MCF 10A (cell line): ENCODE measurements at regions of chr4 and their contacts with region 1.

Region 1: GRCh38 chr4:98467627-98468072 is 190.8 kb downstream of the TSPAN5 start:
- DNase-seq: peak; percentile 86
- H3K4me3 Mint-ChIP-seq: peak overlapping the region; percentile 71
- H3K27ac Mint-ChIP-seq: no peak overlapping the region
- H3K4me1 Mint-ChIP-seq: peaks cover 11% of the 10 kb centered on the region
- H3K27me3 Mint-ChIP-seq: no peaks in the 10 kb centered on the region
- CTCF ChIP-seq: peak; percentile 68

Region 2: GRCh38 chr4:98150092-98150761 is 317.4 kb before region 1 on chr4:
- CTCF ChIA-PET with region 1: interaction called, 14 read pairs
- POLR2A ChIA-PET with region 1: no interaction called
- intact Hi-C with region 1: loop called (anchors 2 kb)
- DNase-seq: peak; percentile 20
- H3K4me3 Mint-ChIP-seq: no peak overlapping the region
- H3K27ac Mint-ChIP-seq: no peak overlapping the region
- H3K4me1 Mint-ChIP-seq: no peaks in the 10 kb centered on the region
- H3K27me3 Mint-ChIP-seq: no peaks in the 10 kb centered on the region
- CTCF ChIP-seq: peak; percentile 30

Region 3: GRCh38 chr4:98452091-98452490 is 15.6 kb before region 1 on chr4:
- CTCF ChIA-PET with region 1: interaction called, 28 read pairs
- POLR2A ChIA-PET with region 1: no interaction called
- intact Hi-C with region 1: no loop called
- DNase-seq: no peak
- H3K4me3 Mint-ChIP-seq: no peak overlapping the region
- H3K27ac Mint-ChIP-seq: no peak overlapping the region
- H3K4me1 Mint-ChIP-seq: peaks cover 17% of the 10 kb centered on the region
- H3K27me3 Mint-ChIP-seq: no peaks in the 10 kb centered on the region
- CTCF ChIP-seq: no peak

Region 4: GRCh38 chr4:98627531-98628257 is 160.0 kb after region 1 on chr4:
- CTCF ChIA-PET with region 1: interaction called, 3 read pairs
- POLR2A ChIA-PET with region 1: no interaction called
- intact Hi-C with region 1: loop called (anchors 1 kb)
- DNase-seq: peak; percentile 23
- H3K4me3 Mint-ChIP-seq: no peak overlapping the region
- H3K27ac Mint-ChIP-seq: peak overlapping the region; percentile 13
- H3K4me1 Mint-ChIP-seq: peaks cover 36% of the 10 kb centered on the region
- H3K27me3 Mint-ChIP-seq: no peaks in the 10 kb centered on the region
- CTCF ChIP-seq: no peak

Region 5: GRCh38 chr4:98733601-98734000 is 266.0 kb after region 1 on chr4:
- CTCF ChIA-PET with region 1: interaction called, 4 read pairs
- POLR2A ChIA-PET with region 1: no interaction called
- intact Hi-C with region 1: loop called (anchors 5 kb)
- DNase-seq: no peak
- H3K4me3 Mint-ChIP-seq: no peak overlapping the region
- H3K27ac Mint-ChIP-seq: no peak overlapping the region
- H3K4me1 Mint-ChIP-seq: no peaks in the 10 kb centered on the region
- H3K27me3 Mint-ChIP-seq: no peaks in the 10 kb centered on the region
- CTCF ChIP-seq: no peak

Region 6: DNA sequence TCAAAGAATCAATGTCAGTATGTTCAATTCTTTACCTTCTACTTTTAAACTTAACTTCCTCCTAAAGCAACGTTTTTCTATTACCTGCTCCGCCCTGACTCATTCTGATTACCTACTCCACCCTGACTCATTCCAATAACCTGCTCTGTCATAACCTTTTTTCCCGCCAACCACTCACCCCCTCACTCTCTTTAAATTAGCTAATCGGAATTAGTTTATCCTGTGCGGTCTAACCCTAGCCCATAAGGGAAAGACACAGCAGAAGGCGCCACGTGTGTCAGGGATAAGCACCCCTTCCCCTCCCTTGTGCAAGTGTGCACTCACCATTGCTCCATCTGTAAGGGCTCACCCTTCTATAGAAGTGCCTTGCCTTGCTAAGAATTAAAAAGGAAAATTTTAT is 396.9 kb after region 1 on chr4:
- CTCF ChIA-PET with region 1: interaction called, 4 read pairs
- POLR2A ChIA-PET with region 1: no interaction called
- intact Hi-C with region 1: loop called (anchors 10 kb)
- DNase-seq: peak; percentile 33
- H3K4me3 Mint-ChIP-seq: no peak overlapping the region
- H3K27ac Mint-ChIP-seq: no peak overlapping the region
- H3K4me1 Mint-ChIP-seq: peaks cover 8% of the 10 kb centered on the region
- H3K27me3 Mint-ChIP-seq: no peaks in the 10 kb centered on the region
- CTCF ChIP-seq: no peak

Region 7: GRCh38 chr4:99054428-99054994 is 586.9 kb after region 1 on chr4:
- CTCF ChIA-PET with region 1: interaction called, 12 read pairs
- POLR2A ChIA-PET with region 1: interaction called, 3 read pairs
- intact Hi-C with region 1: loop called (anchors 10 kb)
- DNase-seq: no peak
- H3K4me3 Mint-ChIP-seq: no peak overlapping the region
- H3K27ac Mint-ChIP-seq: no peak overlapping the region
- H3K4me1 Mint-ChIP-seq: peaks cover 14% of the 10 kb centered on the region
- H3K27me3 Mint-ChIP-seq: no peaks in the 10 kb centered on the region
- CTCF ChIP-seq: no peak